CD14-positive monocyte (primary cell): ENCODE measurements at regions of chr1 and their contacts with region 1.

Region 1: GRCh38 chr1:65067491-65068201 is 80.4 kb upstream of the AK4 start:
- DNase-seq: peak; percentile 62 to 67 (median 65)
- H3K4me3 ChIP-seq: peak overlapping the region; percentile 75 to 99 (median 97)
- H3K4me3 Mint-ChIP-seq: peak overlapping the region; percentile 90 to 93
- H3K27ac ChIP-seq: peak overlapping the region; percentile 93 to 99
- H3K27ac Mint-ChIP-seq: peak overlapping the region; percentile 95 to 98 (median 98)
- H3K4me1 ChIP-seq: peaks cover 28 to 40% of the 10 kb centered on the region in 2 donors
- H3K4me1 Mint-ChIP-seq: peaks cover 42% of the 10 kb centered on the region
- H3K27me3 ChIP-seq: no peaks in the 10 kb centered on the region
- H3K27me3 Mint-ChIP-seq: peaks cover 0 to 2% (median 0%) of the 10 kb centered on the region in 3 donors
- CTCF ChIP-seq: no peak

Region 2: GRCh38 chr1:65165269-65165993 is 97.8 kb after region 1 on chr1:
- intact Hi-C with region 1: loop called in 1 of 2 experiments (anchors 5 kb)
- DNase-seq: peak; percentile 77 to 83 (median 78)
- H3K4me3 ChIP-seq: peak overlapping the region in 1 of 3 experiments; percentile 26
- H3K4me3 Mint-ChIP-seq: peak overlapping the region in 1 of 2 donors; percentile 56
- H3K27ac ChIP-seq: peak overlapping the region in 1 of 2 donors; percentile 62
- H3K27ac Mint-ChIP-seq: peak overlapping the region; percentile 60 to 91 (median 80)
- H3K4me1 ChIP-seq: peaks cover 50 to 83% of the 10 kb centered on the region in 2 donors
- H3K4me1 Mint-ChIP-seq: peaks cover 78% of the 10 kb centered on the region
- H3K27me3 ChIP-seq: no peaks in the 10 kb centered on the region
- H3K27me3 Mint-ChIP-seq: peaks cover 0 to 2% (median 0%) of the 10 kb centered on the region in 3 donors
- CTCF ChIP-seq: no peak

Region 3: DNA sequence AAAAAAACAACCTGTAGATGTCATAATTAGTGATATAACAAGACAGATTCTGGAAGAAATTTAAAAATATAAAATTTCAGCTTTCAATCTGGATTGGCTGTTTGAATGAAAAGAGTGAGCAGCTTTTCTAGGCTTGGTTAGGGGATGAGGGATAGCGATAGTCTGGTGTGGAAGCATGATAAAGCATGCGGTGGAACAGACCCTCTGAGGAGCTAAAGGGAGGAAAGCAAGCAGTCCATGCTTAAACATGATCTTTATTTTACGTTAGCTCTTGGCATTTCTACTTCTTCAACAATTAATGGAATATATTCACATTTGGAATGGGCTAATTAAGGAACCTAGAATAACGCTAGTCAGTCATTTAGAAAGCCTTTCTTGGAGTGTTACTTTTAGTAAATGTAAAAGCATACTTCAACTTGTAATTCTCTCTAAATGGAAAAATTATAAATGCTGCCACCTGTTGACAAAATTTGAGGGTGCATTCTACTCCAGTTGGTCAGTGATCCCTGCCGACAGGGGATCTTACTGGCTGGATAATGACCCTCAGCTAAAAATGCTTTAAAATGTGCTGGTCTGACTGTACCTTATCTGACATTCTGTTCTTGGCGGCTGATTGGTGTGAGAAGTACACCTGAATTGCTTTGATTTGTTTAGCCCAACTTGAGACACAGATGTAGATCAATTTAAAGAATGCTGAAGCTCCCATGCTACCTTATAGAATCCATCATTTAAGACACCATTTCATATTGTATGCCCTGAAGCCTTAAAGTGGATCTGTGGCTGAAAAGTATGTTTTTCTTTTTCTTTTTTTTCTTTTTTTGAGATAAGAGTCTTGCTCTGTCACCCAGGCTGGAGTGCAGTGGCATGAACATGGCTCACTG is 141.6 kb after region 1 on chr1:
- intact Hi-C with region 1: loop called in 1 of 2 experiments (anchors 2 kb)
- DNase-seq: peak; percentile 30 to 53 (median 39)
- H3K4me3 ChIP-seq: no peak overlapping the region
- H3K4me3 Mint-ChIP-seq: no peak overlapping the region
- H3K27ac ChIP-seq: no peak overlapping the region
- H3K27ac Mint-ChIP-seq: peak overlapping the region in 3 of 7 donors; percentile 28 to 75 (median 66)
- H3K4me1 ChIP-seq: peaks cover 21 to 24% of the 10 kb centered on the region in 2 donors
- H3K4me1 Mint-ChIP-seq: peaks cover 29% of the 10 kb centered on the region
- H3K27me3 ChIP-seq: no peaks in the 10 kb centered on the region
- H3K27me3 Mint-ChIP-seq: no peaks in the 10 kb centered on the region
- CTCF ChIP-seq: peak; percentile 75

Region 4: DNA sequence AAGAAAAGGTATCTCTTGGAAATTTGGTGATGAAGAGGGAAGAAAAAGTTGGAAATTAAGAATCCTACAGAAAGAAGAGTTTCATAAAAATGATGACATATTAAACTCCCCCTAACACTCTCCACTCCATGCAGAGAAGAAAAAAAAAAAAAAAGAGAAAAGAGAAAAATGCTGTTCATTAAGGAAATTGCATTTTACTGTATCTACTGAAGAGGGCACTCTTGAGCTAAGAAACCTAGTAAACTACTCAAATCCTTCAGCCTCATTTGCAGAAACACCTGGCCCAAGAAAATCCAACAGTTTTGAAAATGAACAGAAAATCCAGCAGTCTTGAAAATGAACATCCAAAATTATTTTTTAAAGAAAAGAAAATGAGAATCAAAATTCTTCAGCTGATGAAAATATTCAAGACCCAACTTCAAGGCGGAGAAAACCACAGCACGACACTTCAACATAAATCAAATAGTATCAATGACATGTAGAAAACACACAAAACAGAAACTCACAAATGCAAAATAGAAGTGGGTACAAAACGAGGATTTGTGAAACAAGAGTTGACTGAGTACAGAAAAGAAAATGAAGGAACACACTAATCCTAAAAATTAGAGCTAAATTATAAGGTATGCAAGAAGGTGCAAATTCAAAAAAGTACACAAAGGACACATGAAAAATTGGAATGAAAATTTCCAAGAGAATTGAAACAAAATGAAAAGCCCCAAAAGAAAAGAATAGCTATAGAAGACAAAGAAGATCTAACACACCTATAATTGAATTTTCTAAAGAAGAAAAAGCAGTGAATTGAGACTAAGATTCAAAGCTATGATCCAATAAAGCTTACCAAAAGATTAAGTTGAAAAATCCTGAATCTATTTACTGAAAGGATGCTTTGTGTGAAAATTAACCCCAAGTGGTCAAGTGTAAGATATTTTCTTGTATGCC is 168.5 kb after region 1 on chr1:
- intact Hi-C with region 1: no loop called
- DNase-seq: peak; percentile 27 to 62 (median 46)
- H3K4me3 ChIP-seq: no peak overlapping the region
- H3K4me3 Mint-ChIP-seq: no peak overlapping the region
- H3K27ac ChIP-seq: no peak overlapping the region
- H3K27ac Mint-ChIP-seq: no peak overlapping the region
- H3K4me1 ChIP-seq: no peaks in the 10 kb centered on the region
- H3K4me1 Mint-ChIP-seq: peaks cover 4% of the 10 kb centered on the region
- H3K27me3 ChIP-seq: no peaks in the 10 kb centered on the region
- H3K27me3 Mint-ChIP-seq: peaks cover 0 to 2% (median 0%) of the 10 kb centered on the region in 3 donors
- CTCF ChIP-seq: peak; percentile 85

Region 5: DNA sequence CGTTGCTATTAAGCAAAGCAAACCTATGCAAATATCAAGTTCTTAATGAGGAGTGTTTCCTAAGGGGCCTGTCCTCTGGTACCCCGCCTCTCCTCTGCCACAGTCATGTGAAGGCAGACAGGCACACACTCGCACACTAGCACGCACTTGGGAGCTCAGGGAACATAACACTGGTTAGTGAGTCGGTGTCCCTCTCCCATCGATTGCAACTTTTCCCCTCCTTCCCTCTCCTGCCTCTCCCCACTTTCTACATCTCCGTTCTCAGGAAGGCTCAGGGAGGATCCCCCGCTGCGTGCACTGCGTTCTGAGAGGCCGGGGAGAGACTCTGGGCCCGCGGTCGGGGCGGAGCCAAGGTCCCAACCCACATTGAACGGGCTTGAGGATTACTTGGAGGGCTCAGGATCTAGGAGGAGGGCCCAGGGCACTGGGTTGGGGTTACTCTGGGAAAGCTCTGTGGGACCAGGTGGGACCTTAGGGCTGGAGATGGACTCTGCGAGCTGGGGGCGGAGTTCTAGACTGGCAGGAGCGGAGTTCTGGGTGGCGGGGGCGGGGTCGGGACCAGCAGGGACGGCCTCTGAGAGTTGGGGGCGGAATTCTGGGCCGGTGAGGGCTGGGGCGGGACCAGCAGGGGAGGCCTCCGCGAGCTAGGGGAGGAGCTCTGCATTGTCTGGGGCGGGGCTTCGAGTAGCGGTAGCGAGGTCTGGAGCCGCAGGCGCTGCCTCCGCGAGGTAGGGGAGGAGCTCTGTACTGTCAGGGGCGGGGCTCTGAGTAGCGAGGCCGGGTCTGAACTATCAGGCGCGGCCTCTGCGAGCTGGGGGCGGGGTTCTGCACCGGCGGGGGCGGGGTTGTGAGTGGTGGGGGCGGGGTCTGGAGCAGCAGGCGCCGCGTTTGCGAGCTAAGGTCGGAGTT is 352.3 kb after region 1 on chr1:
- intact Hi-C with region 1: loop called in 1 of 2 experiments (anchors 10 kb)
- DNase-seq: peak; percentile 97
- H3K4me3 ChIP-seq: peak overlapping the region; percentile 72 to 89 (median 79)
- H3K4me3 Mint-ChIP-seq: peak overlapping the region in 1 of 2 donors; percentile 96
- H3K27ac ChIP-seq: peak overlapping the region; percentile 95 to 100
- H3K27ac Mint-ChIP-seq: peak overlapping the region in 6 of 7 donors; percentile 84 to 97 (median 88)
- H3K4me1 ChIP-seq: peaks cover 35 to 41% of the 10 kb centered on the region in 2 donors
- H3K4me1 Mint-ChIP-seq: peaks cover 10% of the 10 kb centered on the region
- H3K27me3 ChIP-seq: no peaks in the 10 kb centered on the region
- H3K27me3 Mint-ChIP-seq: no peaks in the 10 kb centered on the region
- CTCF ChIP-seq: no peak